Natural killer cell (primary cell): ENCODE measurements at regions of chr1 and their contacts with region 1.

Region 1: DNA sequence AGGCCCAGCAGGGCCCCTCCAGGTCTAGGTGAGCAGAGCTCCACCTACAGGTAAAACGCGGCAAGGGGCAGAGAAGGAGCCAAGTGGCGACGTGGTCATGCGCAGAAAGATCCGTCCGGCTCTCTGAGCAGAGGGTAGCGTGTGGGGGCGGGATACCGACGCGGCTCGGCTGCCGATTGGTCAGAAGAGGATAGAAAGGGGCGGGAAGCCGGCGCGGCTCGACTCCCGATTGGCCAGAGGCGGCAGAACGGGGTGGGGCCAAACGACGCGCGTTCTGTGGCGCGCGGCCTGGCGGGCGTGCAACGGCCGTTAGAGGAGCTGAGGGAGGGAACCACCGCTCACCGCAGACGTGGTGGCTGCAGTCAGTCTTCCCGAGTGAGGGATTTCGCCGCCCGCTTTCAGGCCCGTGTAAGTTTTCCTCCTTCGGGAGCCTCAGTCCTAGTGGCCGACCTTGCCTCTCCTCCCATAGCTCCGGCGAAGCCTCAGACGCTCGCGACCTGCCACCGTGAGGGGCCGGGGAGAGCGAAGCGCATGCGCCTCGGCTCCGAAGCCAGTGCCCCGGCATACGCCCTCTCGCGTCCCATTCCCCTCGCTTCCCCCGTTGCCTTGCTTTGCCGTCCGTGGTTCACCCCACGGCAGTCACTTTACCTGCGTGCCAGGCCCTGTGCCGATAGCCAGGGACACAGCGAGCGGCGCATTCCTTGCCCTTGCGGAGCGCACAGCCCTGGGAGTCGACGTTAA is at the start of gene CEP85:
- DNase-seq: peak; percentile 98 to 100
- ATAC-seq: peak; percentile 91 to 98 (median 91)
- H3K4me3 ChIP-seq: peak within 1 kb of the TSS; percentile 93
- H3K4me3 Mint-ChIP-seq: peak within 1 kb of the TSS; percentile 99
- H3K27ac ChIP-seq: peak within 1 kb of the TSS; percentile 78
- H3K27ac Mint-ChIP-seq: peak within 1 kb of the TSS; percentile 94 to 96
- H3K4me1 ChIP-seq: peaks cover 18% of the 10 kb centered on the region
- H3K4me1 Mint-ChIP-seq: peaks cover 29 to 30% of the 10 kb centered on the region in 2 donors
- H3K27me3 ChIP-seq: no peaks in the 10 kb centered on the region
- H3K27me3 Mint-ChIP-seq: no peaks in the 10 kb centered on the region
- CTCF ChIP-seq: peak; percentile 87
- total RNA-seq, gene CEP85: 13.0 to 20.4 (median 18.0) TPM

Region 2: GRCh38 chr1:26111530-26112406 is 122.3 kb before region 1 on chr1 and contains the start of gene PDIK1L:
- intact Hi-C with region 1: loop called (anchors 1 kb)
- DNase-seq: peak; percentile 91 to 98
- ATAC-seq: peak; percentile 85 to 96 (median 88)
- H3K4me3 ChIP-seq: peak within 1 kb of the TSS; percentile 99
- H3K4me3 Mint-ChIP-seq: peak within 1 kb of the TSS; percentile 91
- H3K27ac ChIP-seq: peak within 1 kb of the TSS; percentile 66
- H3K27ac Mint-ChIP-seq: peak within 1 kb of the TSS; percentile 62 to 84
- H3K4me1 ChIP-seq: peaks cover 13% of the 10 kb centered on the region
- H3K4me1 Mint-ChIP-seq: peaks cover 13 to 14% of the 10 kb centered on the region in 2 donors
- H3K27me3 ChIP-seq: no peaks in the 10 kb centered on the region
- H3K27me3 Mint-ChIP-seq: no peaks in the 10 kb centered on the region
- CTCF ChIP-seq: no peak
- total RNA-seq, gene PDIK1L: 3.1 to 8.2 (median 8.1) TPM

Region 3: DNA sequence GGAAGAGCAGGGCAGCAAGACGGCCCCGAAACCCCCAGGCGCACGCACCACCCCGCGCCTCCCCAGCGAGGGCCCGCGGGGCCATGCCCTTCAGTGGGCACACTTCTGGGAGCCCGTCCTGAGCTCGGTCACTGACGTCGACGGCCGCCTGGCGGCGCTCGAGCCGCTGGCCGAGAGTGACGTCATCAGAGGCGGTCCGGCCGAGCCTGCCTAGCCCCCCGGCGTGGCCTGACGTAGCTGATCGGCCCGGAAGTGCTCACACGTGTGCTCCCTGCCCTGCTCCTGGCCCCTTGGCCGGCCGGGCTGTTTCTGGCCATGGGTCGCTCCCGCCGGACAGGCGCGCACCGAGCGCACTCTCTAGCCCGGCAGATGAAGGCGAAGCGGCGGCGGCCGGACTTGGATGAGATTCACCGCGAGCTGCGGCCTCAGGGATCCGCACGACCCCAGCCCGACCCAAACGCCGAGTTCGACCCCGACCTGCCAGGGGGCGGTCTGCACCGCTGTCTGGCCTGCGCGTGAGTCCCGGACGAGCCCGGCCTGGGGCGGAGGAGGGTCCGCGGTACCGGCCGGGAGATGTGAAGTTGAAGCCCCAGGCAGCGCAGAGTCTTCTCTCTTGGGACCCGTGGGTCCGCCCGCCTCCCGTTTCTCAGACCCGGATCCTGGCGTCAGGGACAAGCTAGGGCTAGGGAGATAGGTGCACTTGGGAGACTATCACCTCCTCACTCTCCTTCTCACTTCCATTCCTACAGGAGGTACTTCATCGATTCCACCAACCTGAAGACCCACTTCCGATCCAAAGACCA is 64.2 kb before region 1 on chr1 and contains the start of gene ZNF593:
- intact Hi-C with region 1: loop called (anchors 5 kb)
- DNase-seq: peak; percentile 90 to 92
- ATAC-seq: peak; percentile 94 to 96 (median 96)
- H3K4me3 ChIP-seq: peak within 1 kb of the TSS; percentile 60
- H3K4me3 Mint-ChIP-seq: peak within 1 kb of the TSS; percentile 84
- H3K27ac ChIP-seq: peak within 1 kb of the TSS; percentile 10
- H3K27ac Mint-ChIP-seq: peak within 1 kb of the TSS; percentile 66 to 92
- H3K4me1 ChIP-seq: peaks cover 18% of the 10 kb centered on the region
- H3K4me1 Mint-ChIP-seq: peaks cover 0 to 21% of the 10 kb centered on the region in 2 donors
- H3K27me3 ChIP-seq: no peaks in the 10 kb centered on the region
- H3K27me3 Mint-ChIP-seq: peaks cover 0 to 12% of the 10 kb centered on the region in 2 donors
- CTCF ChIP-seq: peak; percentile 83
- total RNA-seq, gene ZNF593: 8.6 to 17.8 (median 15.6) TPM

Region 4: DNA sequence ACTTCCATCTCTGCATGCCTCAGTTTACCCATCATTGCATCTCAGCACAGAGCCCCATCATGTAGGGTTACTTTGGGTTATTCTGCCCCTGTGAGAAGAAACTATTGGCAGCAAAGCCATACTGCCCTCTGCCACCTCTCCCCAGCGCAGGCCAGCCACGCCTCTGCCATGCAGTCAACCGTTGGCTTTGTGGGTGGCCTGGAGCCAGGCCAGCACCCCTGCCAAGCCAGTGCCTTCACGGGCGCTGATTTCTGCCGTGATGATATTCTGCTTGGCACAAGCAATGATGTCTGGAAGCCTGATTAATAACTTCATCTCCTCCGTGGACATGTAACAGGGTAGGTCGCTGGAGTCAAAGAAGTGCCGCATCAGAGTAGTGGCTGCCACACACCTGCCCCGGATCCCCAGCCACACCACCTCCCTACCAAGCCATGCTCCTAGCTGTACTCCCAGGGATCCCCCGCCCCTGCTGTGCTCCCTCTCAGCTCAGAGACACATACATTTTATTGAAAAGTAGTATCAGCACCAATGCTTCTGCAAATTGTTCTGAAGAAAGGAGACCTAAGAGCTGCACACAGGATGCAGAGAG is 15.1 kb before region 1 on chr1:
- intact Hi-C with region 1: no loop called
- DNase-seq: no peak
- ATAC-seq: no peak
- H3K4me3 ChIP-seq: no peak overlapping the region
- H3K4me3 Mint-ChIP-seq: no peak overlapping the region
- H3K27ac ChIP-seq: no peak overlapping the region
- H3K27ac Mint-ChIP-seq: no peak overlapping the region
- H3K4me1 ChIP-seq: no peaks in the 10 kb centered on the region
- H3K4me1 Mint-ChIP-seq: no peaks in the 10 kb centered on the region
- H3K27me3 ChIP-seq: no peaks in the 10 kb centered on the region
- H3K27me3 Mint-ChIP-seq: peaks cover 0 to 2% of the 10 kb centered on the region in 2 donors
- CTCF ChIP-seq: no peak